T-cell (primary cell): ENCODE measurements at regions of chr21 and their contacts with region 1.

Region 1: GRCh38 chr21:44949779-44950198 is 10.0 kb downstream of the SLX9 start:
- DNase-seq: peak; percentile 36 to 88 (median 75)
- ATAC-seq: peak; percentile 85 to 96 (median 89)
- H3K4me3 ChIP-seq: no peak overlapping the region
- H3K4me3 Mint-ChIP-seq: no peak overlapping the region
- H3K27ac ChIP-seq: no peak overlapping the region
- H3K27ac Mint-ChIP-seq: no peak overlapping the region
- H3K4me1 ChIP-seq: peaks cover 0 to 18% of the 10 kb centered on the region in 2 experiments
- H3K4me1 Mint-ChIP-seq: peaks cover 7 to 20% (median 11%) of the 10 kb centered on the region in 3 donors
- H3K27me3 ChIP-seq: no peaks in the 10 kb centered on the region
- H3K27me3 Mint-ChIP-seq: no peaks in the 10 kb centered on the region

Region 2: DNA sequence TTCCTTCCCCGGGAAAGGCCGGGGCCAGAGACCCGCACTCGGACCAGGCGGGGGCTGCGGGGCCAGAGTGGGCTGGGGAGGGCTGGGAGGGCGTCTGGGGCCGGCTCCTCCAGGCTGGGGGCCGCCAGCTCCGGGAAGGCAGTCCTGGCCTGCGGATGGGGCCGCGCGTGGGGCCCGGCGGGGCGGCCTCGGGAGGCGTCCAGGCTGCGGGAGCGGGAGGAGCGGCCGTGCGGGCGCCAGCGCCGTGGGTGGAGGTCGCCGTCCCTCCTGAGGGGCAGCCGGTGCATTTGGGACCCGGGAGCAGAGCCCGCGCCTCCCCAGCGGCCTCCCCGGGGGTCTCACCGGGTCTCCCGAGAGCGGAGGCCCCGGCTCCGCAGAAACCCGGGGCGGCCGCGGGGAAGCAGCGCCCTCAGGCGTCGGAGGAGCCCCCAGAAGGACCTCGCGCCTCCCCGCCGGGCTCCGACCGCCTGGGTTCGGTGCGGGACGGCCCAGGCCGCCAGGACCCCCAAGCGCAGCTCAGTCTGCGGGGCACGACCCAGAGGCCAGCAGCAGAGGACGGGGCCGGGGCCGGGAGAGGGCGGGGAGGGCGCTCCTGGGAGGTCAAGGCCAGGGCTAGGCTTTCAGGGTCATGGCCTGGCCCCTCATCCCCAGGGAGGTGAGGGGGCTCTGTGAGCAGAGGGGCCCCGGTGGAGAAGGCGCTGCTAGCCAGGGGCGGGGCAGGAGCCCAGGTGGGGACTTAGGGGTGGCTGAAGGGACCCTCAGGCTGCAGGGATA is 17.2 kb before region 1 on chr21:
- CTCF ChIA-PET with region 1: interaction called in 1 of 2 experiments, 15 read pairs
- POLR2A ChIA-PET with region 1: no interaction called
- DNase-seq: peak; percentile 23 to 80 (median 64)
- ATAC-seq: peak; percentile 68 to 74 (median 70)
- H3K4me3 ChIP-seq: peak overlapping the region; percentile 60 to 63
- H3K4me3 Mint-ChIP-seq: peak overlapping the region; percentile 69 to 100 (median 84)
- H3K27ac ChIP-seq: no peak overlapping the region
- H3K27ac Mint-ChIP-seq: no peak overlapping the region
- H3K4me1 ChIP-seq: peaks cover 14 to 57% of the 10 kb centered on the region in 2 experiments
- H3K4me1 Mint-ChIP-seq: peaks cover 36 to 38% (median 37%) of the 10 kb centered on the region in 3 donors
- H3K27me3 ChIP-seq: peaks cover 0 to 4% of the 10 kb centered on the region in 2 experiments
- H3K27me3 Mint-ChIP-seq: no peaks in the 10 kb centered on the region

Region 3: DNA sequence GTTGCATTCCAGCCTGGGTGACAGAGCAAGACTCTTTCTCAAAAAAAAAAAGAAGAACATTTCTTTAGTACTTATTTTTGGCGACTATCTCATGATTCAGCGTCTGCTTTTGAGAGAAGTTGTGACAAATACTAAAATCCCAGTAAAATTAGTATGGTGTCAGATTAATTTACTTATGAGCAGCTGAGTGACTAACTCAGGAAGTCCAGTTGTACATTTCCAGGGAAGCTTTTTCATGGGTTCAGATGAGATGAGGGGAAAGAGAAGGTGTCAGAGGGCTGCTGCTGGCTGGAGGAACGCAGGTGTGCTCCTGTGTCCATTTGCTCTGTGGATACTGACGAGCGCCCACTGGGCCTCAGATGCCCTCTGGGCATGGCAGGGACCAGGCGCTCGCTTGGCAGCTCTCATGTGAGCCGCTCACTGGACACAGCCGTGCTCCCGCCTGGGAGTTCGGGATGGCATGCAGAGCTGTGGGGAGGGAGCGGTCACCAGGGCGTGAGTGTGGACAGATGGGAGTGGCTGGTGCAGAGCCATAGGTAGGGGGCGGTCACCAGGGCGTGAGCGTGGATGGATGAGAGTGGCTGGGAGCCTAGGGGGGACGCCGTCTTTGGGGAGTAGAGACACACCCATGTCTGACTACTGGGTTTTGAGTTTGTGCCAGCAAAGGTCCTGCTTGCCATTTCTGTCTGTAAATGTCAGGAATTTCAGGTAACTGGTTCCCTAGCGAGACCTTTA is 179.6 kb after region 1 on chr21:
- CTCF ChIA-PET with region 1: interaction called, 21 to 44 read pairs
- POLR2A ChIA-PET with region 1: no interaction called
- DNase-seq: no peak
- ATAC-seq: no peak
- H3K4me3 ChIP-seq: no peak overlapping the region
- H3K4me3 Mint-ChIP-seq: no peak overlapping the region
- H3K27ac ChIP-seq: no peak overlapping the region
- H3K27ac Mint-ChIP-seq: no peak overlapping the region
- H3K4me1 ChIP-seq: peaks cover 2 to 4% of the 10 kb centered on the region in 2 experiments
- H3K4me1 Mint-ChIP-seq: peaks cover 29 to 43% (median 37%) of the 10 kb centered on the region in 3 donors
- H3K27me3 ChIP-seq: no peaks in the 10 kb centered on the region
- H3K27me3 Mint-ChIP-seq: no peaks in the 10 kb centered on the region

Region 4: DNA sequence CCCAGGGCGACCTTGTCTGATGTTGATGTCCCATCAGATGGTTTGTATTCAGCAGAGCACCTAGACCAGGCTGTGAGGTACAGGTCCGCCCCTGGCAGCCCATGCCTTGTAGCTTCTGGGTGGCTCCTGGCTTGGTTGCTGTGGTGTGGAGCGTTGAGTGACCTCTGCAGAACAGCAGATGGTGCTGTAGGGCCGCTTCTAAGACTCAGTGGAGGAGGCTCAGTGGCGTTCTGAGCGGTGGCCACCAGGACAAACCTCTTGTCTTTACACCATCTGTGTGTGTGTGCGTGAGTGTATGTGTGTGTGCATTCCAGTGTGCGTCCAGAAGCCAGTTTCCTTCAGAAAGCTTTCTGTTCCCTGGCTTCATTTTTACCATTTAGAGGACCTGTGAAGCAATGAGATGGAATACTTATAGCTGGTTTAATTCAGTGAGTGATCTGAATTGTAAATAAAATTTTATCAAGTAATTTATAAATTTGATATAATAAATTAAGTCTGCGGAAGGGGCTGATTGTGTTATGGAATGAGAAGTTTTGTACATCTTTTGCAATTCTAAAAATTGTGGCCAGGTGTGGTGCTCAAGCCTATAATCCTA is 190.7 kb after region 1 on chr21:
- CTCF ChIA-PET with region 1: interaction called, 18 to 57 read pairs
- POLR2A ChIA-PET with region 1: no interaction called
- DNase-seq: peak in 33 of 35 experiments; percentile 29 to 75 (median 53)
- ATAC-seq: peak; percentile 71 to 88 (median 78)
- H3K4me3 ChIP-seq: no peak overlapping the region
- H3K4me3 Mint-ChIP-seq: no peak overlapping the region
- H3K27ac ChIP-seq: no peak overlapping the region
- H3K27ac Mint-ChIP-seq: no peak overlapping the region
- H3K4me1 ChIP-seq: peaks cover 0 to 5% of the 10 kb centered on the region in 2 experiments
- H3K4me1 Mint-ChIP-seq: peaks cover 11 to 23% (median 18%) of the 10 kb centered on the region in 3 donors
- H3K27me3 ChIP-seq: no peaks in the 10 kb centered on the region
- H3K27me3 Mint-ChIP-seq: no peaks in the 10 kb centered on the region